ENCODE measurements at regions of chr13 and their contacts with region 1.

Region 1: DNA sequence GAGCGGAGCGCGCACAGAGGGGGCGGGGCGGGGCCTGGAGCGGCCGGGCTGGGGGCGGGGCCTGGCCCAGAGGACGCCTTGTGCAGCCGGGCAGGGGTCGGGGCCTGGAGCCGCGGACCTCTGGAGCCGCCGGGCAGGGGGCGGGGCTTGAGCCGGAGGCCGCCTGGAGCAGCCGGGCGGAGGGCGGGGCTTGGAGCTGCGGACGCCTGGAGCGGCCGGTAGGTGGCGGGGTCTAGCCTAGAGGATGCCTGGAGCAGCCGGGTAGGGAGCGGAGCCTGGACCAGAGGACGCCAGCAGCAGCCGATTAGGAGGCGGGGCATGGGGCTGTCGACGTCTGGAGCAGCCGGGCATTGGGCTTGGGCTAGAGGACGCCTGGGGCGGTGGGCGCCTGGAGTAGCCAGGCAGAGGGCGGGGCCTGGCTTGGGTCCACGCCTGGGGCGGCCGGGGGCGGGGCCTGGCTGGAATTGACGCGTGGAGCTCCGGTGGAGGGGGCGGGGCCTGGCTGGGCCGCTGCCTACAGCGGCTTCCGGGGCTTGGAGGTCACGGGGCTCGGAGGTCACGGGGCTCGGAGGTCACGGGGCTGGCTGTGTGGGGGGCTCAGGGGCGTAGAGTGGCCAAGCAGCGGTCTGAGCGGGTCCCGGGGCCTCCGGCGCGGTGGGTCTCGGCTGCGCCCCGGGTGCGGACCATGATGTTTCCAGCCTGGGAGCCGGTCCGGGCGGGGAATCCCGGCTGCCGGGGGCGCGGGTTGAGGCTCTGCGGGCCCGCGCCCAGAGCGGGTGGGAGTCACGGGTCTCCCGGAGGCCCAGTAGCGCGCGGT is at the start of gene ANKRD10:
- DNase-seq: peak; percentile 97
- ATAC-seq: peak; percentile 83
- H3K4me3 Mint-ChIP-seq: peak within 1 kb of the TSS; percentile 92
- H3K27ac Mint-ChIP-seq: peak within 1 kb of the TSS; percentile 97
- H3K4me1 Mint-ChIP-seq: peaks cover 43% of the 10 kb centered on the region
- H3K27me3 Mint-ChIP-seq: no peaks in the 10 kb centered on the region
- total RNA-seq, gene ANKRD10: 83.9 to 86.3 TPM

Region 2: DNA sequence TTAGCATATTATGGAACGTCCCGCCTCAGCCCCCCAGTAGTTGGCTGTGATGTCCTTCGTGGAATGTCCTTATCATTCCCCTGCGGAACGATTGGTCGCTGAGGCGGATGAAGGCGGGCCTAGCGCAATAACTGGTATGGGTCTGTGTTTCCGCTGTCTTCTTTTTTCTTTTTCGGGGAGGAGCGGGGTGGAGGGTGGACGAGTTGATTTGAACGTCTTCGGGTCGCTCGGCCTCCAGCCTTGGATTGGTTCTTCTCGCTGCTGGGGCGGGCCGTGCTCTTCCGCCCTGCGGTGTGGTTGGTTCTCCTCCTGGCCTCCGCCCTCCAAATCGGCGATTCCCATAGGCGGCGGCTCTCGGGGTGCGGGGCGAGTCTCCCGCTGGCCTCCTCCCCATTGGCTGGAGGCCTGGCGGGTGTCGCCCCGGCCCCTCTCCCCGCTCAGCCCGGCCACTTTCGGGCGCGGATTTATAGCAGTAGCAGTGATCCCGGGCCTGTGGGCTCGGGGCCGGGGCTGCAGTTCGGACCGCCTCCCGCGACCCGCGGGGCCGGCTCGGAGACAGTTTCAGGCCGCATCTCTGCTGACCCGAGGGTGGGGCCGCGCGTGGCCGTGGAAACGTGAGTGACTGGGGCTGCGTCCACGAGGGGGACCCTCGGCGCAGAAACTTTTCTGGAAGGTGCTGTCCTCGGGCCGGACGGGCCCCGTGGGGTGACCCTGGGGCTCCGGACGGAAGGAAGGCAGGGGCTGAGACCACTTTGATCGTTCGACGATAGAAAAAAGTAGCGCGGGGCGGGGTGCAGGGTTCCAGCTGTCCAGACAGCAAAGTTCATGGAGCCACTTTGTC is 199.7 kb before region 1 on chr13:
- CTCF ChIA-PET with region 1: interaction called, 5 read pairs
- POLR2A ChIA-PET with region 1: interaction called, 26 read pairs
- DNase-seq: peak; percentile 98
- ATAC-seq: peak; percentile 68
- H3K4me3 Mint-ChIP-seq: peak overlapping the region; percentile 91
- H3K27ac Mint-ChIP-seq: peak overlapping the region; percentile 95
- H3K4me1 Mint-ChIP-seq: peaks cover 29% of the 10 kb centered on the region
- H3K27me3 Mint-ChIP-seq: no peaks in the 10 kb centered on the region

Region 3: DNA sequence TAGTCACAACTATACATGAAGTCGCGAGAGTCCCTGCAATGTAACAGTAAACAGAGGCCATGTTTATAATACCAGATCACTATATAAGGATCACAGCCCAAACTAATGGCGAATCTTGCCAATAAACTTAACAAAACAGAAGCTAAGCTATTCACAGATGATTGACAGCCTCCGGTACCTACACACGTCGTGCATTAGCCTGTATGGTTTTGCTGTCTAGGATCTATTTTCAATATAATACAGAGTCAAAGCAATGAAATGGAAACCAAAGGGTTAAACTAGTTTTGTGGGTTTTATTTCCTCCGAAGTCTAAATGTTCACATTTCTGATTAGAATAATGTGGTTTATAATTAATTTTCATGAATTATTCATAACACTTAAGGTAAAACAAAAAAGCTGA is 10.5 kb before region 1 on chr13:
- CTCF ChIA-PET with region 1: interaction called, 20 read pairs
- POLR2A ChIA-PET with region 1: interaction called, 9 read pairs
- DNase-seq: no peak
- ATAC-seq: no peak
- H3K4me3 Mint-ChIP-seq: no peak overlapping the region
- H3K27ac Mint-ChIP-seq: no peak overlapping the region
- H3K4me1 Mint-ChIP-seq: peaks cover 31% of the 10 kb centered on the region
- H3K27me3 Mint-ChIP-seq: no peaks in the 10 kb centered on the region

Region 4: DNA sequence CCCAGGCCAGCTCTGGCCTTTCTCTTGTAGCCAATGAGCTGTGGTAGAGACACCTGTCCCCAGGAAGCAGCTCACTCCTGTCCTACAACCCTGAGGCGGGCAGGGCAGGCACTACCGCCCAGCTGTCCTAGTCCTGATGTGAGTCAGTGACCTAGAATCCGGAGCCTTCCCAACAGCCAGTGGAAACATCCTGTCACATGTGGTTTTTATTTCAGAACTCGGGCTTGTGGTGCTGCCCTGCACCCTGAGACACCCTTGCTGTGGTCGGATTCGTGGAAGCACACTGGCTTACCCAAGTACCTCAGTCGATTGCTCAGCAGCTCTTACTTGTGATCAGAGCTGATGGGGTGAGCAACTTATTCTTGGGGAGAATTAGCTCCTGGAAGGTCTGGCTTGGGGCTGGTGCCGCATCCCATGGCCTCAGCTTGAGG is 116.3 kb after region 1 on chr13:
- CTCF ChIA-PET with region 1: no interaction called
- POLR2A ChIA-PET with region 1: no interaction called
- DNase-seq: no peak
- ATAC-seq: peak; percentile 23
- H3K4me3 Mint-ChIP-seq: no peak overlapping the region
- H3K27ac Mint-ChIP-seq: no peak overlapping the region
- H3K4me1 Mint-ChIP-seq: no peaks in the 10 kb centered on the region
- H3K27me3 Mint-ChIP-seq: peaks cover 19% of the 10 kb centered on the region

Measured in activated CD8-positive, alpha-beta T cell treated with anti-CD3 and anti-CD28 coated beads, Interleukin-2, amount 10 ng/mL, durations not matched to agents 7 days and 5 days (primary cell).